ENCODE measurements at regions of chrX and their contacts with region 1.

Region 1: DNA sequence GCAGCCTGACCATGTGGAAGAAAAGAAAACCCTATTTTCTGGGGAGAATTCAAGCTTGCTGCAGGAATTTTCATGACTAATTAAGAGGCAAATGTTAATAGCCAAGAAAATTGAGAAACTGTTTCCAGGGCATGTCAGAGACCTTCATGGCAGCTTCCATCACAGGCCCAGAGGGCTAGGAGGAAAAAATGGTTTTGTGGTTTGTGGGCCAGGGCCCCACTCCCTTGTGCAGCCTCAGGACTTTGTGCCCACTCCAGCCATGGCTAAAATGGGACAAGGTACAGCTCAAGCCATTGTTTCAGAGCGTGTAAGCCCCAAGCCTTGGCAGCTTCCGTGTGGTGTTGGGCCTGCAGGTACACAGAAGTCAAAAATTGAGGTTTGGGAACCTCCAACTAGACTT is 282.9 kb downstream of the DCAF12L2 start:
- DNase-seq: no peak
- ATAC-seq: no peak
- H3K4me3 ChIP-seq: no peak overlapping the region
- H3K27ac ChIP-seq: no peak overlapping the region
- H3K4me1 ChIP-seq: no peaks in the 10 kb centered on the region
- H3K27me3 ChIP-seq: no peaks in the 10 kb centered on the region
- CTCF ChIP-seq: no peak
- POLR2A ChIP-seq: no peak
- RAD21 ChIP-seq: no peak

Region 2: GRCh38 chrX:125736008-125736729 is 147.0 kb before region 1 on chrX:
- CTCF ChIA-PET with region 1: no interaction called
- POLR2A ChIA-PET with region 1: no interaction called
- dilution Hi-C with region 1: no loop called
- in situ Hi-C with region 1: no loop called
- intact Hi-C with region 1: loop called (anchors 10 kb)
- DNase-seq: no peak
- ATAC-seq: no peak
- H3K4me3 ChIP-seq: no peak overlapping the region
- H3K27ac ChIP-seq: no peak overlapping the region
- H3K4me1 ChIP-seq: no peaks in the 10 kb centered on the region
- H3K27me3 ChIP-seq: no peaks in the 10 kb centered on the region
- CTCF ChIP-seq: no peak
- POLR2A ChIP-seq: no peak
- RAD21 ChIP-seq: no peak

Region 3: GRCh38 chrX:125826080-125826479 is 57.1 kb before region 1 on chrX:
- CTCF ChIA-PET with region 1: no interaction called
- POLR2A ChIA-PET with region 1: no interaction called
- dilution Hi-C with region 1: no loop called
- in situ Hi-C with region 1: no loop called
- intact Hi-C with region 1: no loop called
- DNase-seq: no peak
- ATAC-seq: no peak
- H3K4me3 ChIP-seq: no peak overlapping the region
- H3K27ac ChIP-seq: no peak overlapping the region
- H3K4me1 ChIP-seq: no peaks in the 10 kb centered on the region
- H3K27me3 ChIP-seq: no peaks in the 10 kb centered on the region
- CTCF ChIP-seq: no peak
- POLR2A ChIP-seq: no peak
- RAD21 ChIP-seq: no peak